Psoas muscle (tissue), 8 donors: ENCODE measurements at regions of chr1 and their contacts with region 1.

Region 1: GRCh38 chr1:109923131-109923945 is 12.7 kb downstream of the CSF1 start:
- DNase-seq: no peak
- ATAC-seq: no peak
- H3K4me3 ChIP-seq: no peak overlapping the region
- H3K27ac ChIP-seq: no peak overlapping the region
- H3K4me1 ChIP-seq: peaks cover 8% of the 10 kb centered on the region
- H3K27me3 ChIP-seq: no peaks in the 10 kb centered on the region
- CTCF ChIP-seq: no peak

Region 2: GRCh38 chr1:109802901-109803561 is 120.3 kb before region 1 on chr1:
- intact Hi-C with region 1: loop called in 1 of 2 experiments (anchors 5 kb)
- DNase-seq: peak in 1 of 2 donors; percentile 2
- ATAC-seq: no peak
- H3K4me3 ChIP-seq: no peak overlapping the region
- H3K27ac ChIP-seq: no peak overlapping the region
- H3K4me1 ChIP-seq: peaks cover 20% of the 10 kb centered on the region
- H3K27me3 ChIP-seq: no peaks in the 10 kb centered on the region
- CTCF ChIP-seq: no peak